Caco-2 (cell line): ENCODE measurements at regions of chr17 and their contacts with region 1.

Region 1: DNA sequence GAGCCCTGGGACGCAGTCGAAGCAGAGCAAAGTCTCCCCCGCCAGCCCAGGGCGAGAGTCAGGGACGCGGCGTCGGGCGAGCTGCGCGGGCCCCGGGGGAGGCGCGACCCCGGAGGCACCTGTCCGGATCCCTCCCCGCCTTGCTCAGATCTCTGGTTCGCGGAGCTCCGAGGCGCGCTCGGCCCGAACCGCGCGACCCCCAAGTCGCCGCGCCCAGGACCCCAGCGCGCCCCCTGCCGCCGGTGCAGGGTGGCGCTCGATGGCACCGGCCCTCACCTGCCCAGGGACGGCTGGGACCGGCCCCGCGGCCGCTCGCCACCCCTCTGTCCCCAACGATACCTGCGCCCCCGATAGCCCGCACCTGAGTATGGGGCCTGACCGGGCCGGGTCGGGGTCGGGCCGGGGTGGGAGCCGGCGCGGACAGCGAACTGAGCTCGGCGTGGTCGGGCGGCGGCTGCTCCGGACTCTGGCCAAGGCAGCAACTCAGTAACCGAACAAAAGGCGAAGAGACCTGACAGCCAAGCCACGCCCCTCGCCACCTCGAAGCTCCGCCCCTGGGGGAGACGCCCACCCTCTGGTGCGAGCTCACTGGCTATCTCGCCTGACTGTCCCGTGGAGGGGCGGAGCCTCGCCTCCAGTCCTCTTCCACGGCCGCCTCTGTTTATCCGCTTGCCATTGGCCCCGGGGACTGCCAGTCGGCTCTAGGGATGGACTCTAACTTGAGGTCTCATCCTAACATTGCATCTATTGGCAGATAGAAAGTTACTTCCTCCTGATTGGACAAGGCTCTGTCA is at the start of gene JUP:
- DNase-seq: peak; percentile 100
- H3K4me3 ChIP-seq: peak within 1 kb of the TSS; percentile 82
- H3K4me3 Mint-ChIP-seq: peak within 1 kb of the TSS; percentile 74
- H3K27ac Mint-ChIP-seq: peak within 1 kb of the TSS; percentile 93
- H3K4me1 ChIP-seq: peaks cover 23% of the 10 kb centered on the region
- H3K4me1 Mint-ChIP-seq: peaks cover 35% of the 10 kb centered on the region
- H3K27me3 ChIP-seq: no peaks in the 10 kb centered on the region
- H3K27me3 Mint-ChIP-seq: no peaks in the 10 kb centered on the region
- CTCF ChIP-seq: peak; percentile 40 to 91
- total RNA-seq, gene JUP: 392 and 419 TPM in 2 replicates

Region 2: DNA sequence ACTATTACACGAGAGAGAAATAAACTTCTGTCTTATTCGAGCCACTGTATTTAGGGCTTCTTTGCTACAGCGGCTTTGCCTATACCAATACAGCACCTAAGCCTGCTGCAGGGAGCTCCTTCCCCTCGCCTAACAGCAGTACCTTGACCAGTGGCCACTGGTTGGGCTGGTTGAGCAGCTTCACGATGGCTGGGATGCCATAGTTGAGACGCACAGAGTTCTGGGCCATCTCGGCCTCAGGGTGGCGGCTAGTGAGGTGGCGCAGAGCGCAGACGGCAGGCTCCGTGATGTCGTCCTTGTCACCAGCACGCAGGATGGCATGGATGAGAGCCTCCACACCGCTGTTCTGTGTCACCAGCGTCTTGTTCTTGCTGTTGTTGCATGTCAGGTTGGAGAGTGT is 23.6 kb before region 1 on chr17:
- CTCF ChIA-PET with region 1: interaction called, 5 read pairs
- POLR2A ChIA-PET with region 1: interaction called, 12 read pairs
- intact Hi-C with region 1: no loop called
- DNase-seq: no peak
- H3K4me3 ChIP-seq: no peak overlapping the region
- H3K4me3 Mint-ChIP-seq: no peak overlapping the region
- H3K27ac Mint-ChIP-seq: peak overlapping the region; percentile 55
- H3K4me1 ChIP-seq: no peaks in the 10 kb centered on the region
- H3K4me1 Mint-ChIP-seq: no peaks in the 10 kb centered on the region
- H3K27me3 ChIP-seq: no peaks in the 10 kb centered on the region
- H3K27me3 Mint-ChIP-seq: no peaks in the 10 kb centered on the region
- CTCF ChIP-seq: no peak

Region 3: DNA sequence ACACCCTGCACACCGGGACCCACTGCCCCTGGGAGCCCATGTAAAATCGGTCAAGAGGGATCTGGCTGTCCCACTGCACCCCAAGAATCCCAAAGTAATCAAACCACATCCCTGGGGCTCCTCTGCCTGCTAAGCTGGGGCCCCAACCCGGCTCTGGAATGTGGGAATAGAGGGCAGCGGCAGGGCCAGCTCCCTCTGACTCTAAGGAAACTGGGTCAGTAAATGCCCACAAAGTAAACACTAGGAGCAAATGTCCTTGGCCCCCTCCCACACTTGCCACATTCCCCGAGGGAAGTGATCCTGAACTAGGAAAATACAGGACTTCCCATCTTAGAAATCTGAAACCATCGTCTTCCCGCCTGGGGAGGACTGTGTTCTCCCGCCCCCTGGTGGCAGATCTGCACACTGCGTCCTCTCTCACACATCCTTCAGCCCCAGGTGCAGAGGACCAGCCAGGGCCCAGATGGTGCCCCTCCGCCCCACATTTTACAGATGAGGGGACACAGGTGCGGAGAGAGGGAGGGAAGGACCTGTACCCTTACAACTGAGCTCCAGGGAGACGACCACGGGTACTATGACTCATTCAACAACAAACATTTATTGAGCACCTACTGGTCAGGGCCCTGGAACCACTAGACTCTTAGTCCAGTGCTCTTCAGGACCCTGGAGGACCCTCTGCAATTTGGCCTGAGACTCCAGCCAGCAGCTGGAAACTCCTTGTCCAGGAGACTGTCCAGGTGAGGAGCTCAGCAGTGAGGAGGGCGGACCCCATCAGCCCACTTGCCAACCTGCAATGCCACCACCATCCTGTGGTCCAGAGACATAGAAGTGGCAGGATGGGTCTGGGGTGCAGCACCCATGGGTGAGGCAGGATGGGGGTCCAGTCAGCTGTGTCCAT is 15.2 kb after region 1 on chr17:
- CTCF ChIA-PET with region 1: interaction called, 169 read pairs
- POLR2A ChIA-PET with region 1: interaction called, 243 read pairs
- intact Hi-C with region 1: loop called (anchors 1 kb)
- DNase-seq: peak; percentile 91 to 94
- H3K4me3 ChIP-seq: peak overlapping the region; percentile 26
- H3K4me3 Mint-ChIP-seq: peak overlapping the region; percentile 83
- H3K27ac Mint-ChIP-seq: peak overlapping the region; percentile 99
- H3K4me1 ChIP-seq: peaks cover 31% of the 10 kb centered on the region
- H3K4me1 Mint-ChIP-seq: peaks cover 38% of the 10 kb centered on the region
- H3K27me3 ChIP-seq: no peaks in the 10 kb centered on the region
- H3K27me3 Mint-ChIP-seq: no peaks in the 10 kb centered on the region
- CTCF ChIP-seq: peak; percentile 97

Region 4: GRCh38 chr17:41848788-41849187 is 62.4 kb after region 1 on chr17:
- CTCF ChIA-PET with region 1: no interaction called
- POLR2A ChIA-PET with region 1: no interaction called
- intact Hi-C with region 1: no loop called
- DNase-seq: no peak
- H3K4me3 ChIP-seq: no peak overlapping the region
- H3K4me3 Mint-ChIP-seq: no peak overlapping the region
- H3K27ac Mint-ChIP-seq: no peak overlapping the region
- H3K4me1 ChIP-seq: no peaks in the 10 kb centered on the region
- H3K4me1 Mint-ChIP-seq: no peaks in the 10 kb centered on the region
- H3K27me3 ChIP-seq: no peaks in the 10 kb centered on the region
- H3K27me3 Mint-ChIP-seq: no peaks in the 10 kb centered on the region
- CTCF ChIP-seq: no peak

Region 5: GRCh38 chr17:41930009-41930832 is 143.8 kb after region 1 on chr17 and contains the start of gene ODAD4:
- CTCF ChIA-PET with region 1: interaction called, 3 read pairs
- POLR2A ChIA-PET with region 1: interaction called, 10 read pairs
- intact Hi-C with region 1: no loop called
- DNase-seq: peak; percentile 97 to 98
- H3K4me3 ChIP-seq: peak within 1 kb of the TSS; percentile 41
- H3K4me3 Mint-ChIP-seq: peak within 1 kb of the TSS; percentile 97
- H3K27ac Mint-ChIP-seq: peak within 1 kb of the TSS; percentile 98
- H3K4me1 ChIP-seq: peaks cover 4% of the 10 kb centered on the region; the same call in 1 of the 2 replicates
- H3K4me1 Mint-ChIP-seq: peaks cover 17% of the 10 kb centered on the region
- H3K27me3 ChIP-seq: no peaks in the 10 kb centered on the region
- H3K27me3 Mint-ChIP-seq: no peaks in the 10 kb centered on the region
- CTCF ChIP-seq: peak; percentile 44 to 60
- total RNA-seq, gene ODAD4: 0.98 and 1.3 TPM in 2 replicates